GM12878 (cell line): ENCODE measurements at regions of chr1 and their contacts with region 1.

Region 1: GRCh38 chr1:76939050-76939816 is 72.0 kb downstream of the ST6GALNAC5 start:
- DNase-seq: no peak
- ATAC-seq: peak; percentile 65
- H3K4me3 ChIP-seq: no peak overlapping the region
- H3K27ac ChIP-seq: no peak overlapping the region
- H3K4me1 ChIP-seq: peaks cover 8% of the 10 kb centered on the region; the same call in 1 of the 2 replicates
- H3K27me3 ChIP-seq: no peaks in the 10 kb centered on the region
- CTCF ChIP-seq: no peak
- EP300 ChIP-seq: peak; percentile 24 to 54; a peak in 2 of 4 replicates
- POLR2A ChIP-seq: no peak
- RAD21 ChIP-seq: no peak

Region 2: DNA sequence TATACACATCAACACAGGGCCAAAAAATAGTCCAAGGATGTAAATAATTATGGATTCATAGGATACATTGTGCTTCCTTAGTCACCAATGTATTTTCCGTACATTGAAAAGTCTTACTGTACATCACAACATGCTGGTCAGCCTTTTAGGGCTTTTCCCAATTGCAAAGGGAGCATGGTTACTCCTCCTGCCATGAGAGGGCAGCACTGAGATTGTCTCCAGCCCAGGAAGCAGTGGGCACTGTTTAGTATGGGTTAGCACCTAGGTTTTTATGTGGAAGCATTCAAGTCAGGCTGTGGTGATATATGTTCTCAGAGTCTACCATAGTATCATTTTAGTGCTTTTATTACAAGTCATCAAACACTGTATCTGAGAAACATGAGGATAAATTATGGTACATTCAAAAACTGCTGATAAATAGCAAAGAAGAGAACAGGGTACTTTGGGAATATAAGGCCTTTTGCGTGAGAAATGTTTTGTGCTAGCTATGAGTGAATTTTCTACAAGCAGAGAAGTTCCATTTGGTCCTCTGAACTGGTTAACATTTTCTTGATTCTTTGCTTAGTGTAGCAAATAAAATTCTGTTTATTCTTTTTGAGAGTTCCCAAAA is 38.0 kb before region 1 on chr1:
- CTCF ChIA-PET with region 1: interaction called, 4 read pairs
- POLR2A ChIA-PET with region 1: interaction called, 3 read pairs
- RAD21 ChIA-PET with region 1: interaction called, 4 read pairs
- SMC1A ChIA-PET with region 1: interaction called, 55 read pairs
- in situ Hi-C with region 1: no loop called
- intact Hi-C with region 1: no loop called
- DNase-seq: peak; percentile 9
- ATAC-seq: peak; percentile 99
- H3K4me3 ChIP-seq: no peak overlapping the region
- H3K27ac ChIP-seq: no peak overlapping the region
- H3K4me1 ChIP-seq: no peaks in the 10 kb centered on the region
- H3K27me3 ChIP-seq: no peaks in the 10 kb centered on the region
- CTCF ChIP-seq: peak; percentile 72 to 80 (median 78)
- EP300 ChIP-seq: no peak
- POLR2A ChIP-seq: no peak
- RAD21 ChIP-seq: peak; percentile 71

Region 3: DNA sequence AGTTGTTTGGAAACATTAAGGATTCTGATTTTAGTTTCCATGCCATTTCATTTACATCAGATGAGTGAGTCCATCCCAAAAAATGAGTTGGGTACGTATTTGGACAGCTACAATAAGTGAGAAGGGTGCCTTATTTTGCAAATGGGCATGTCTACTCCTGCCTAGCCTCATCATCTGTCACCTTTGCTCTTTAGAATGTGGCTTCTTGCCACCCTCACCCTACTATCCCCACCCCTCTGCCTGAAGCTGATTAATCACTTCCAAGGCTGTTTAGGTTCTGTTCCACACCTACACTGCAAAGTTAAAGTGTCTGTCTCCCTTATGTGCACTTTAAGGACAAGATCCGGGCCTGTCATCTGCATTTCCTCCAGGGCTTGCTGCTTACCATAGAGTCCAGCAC is 10.7 kb before region 1 on chr1:
- CTCF ChIA-PET with region 1: interaction called, 13 read pairs
- POLR2A ChIA-PET with region 1: interaction called, 26 read pairs
- RAD21 ChIA-PET with region 1: interaction called, 5 read pairs
- SMC1A ChIA-PET with region 1: interaction called, 28 read pairs
- in situ Hi-C with region 1: no loop called
- intact Hi-C with region 1: no loop called
- DNase-seq: no peak
- ATAC-seq: no peak; the same call in 2 of the 3 replicates
- H3K4me3 ChIP-seq: no peak overlapping the region
- H3K27ac ChIP-seq: no peak overlapping the region
- H3K4me1 ChIP-seq: no peaks in the 10 kb centered on the region
- H3K27me3 ChIP-seq: no peaks in the 10 kb centered on the region
- CTCF ChIP-seq: no peak
- EP300 ChIP-seq: no peak
- POLR2A ChIP-seq: no peak
- RAD21 ChIP-seq: no peak

Region 4: DNA sequence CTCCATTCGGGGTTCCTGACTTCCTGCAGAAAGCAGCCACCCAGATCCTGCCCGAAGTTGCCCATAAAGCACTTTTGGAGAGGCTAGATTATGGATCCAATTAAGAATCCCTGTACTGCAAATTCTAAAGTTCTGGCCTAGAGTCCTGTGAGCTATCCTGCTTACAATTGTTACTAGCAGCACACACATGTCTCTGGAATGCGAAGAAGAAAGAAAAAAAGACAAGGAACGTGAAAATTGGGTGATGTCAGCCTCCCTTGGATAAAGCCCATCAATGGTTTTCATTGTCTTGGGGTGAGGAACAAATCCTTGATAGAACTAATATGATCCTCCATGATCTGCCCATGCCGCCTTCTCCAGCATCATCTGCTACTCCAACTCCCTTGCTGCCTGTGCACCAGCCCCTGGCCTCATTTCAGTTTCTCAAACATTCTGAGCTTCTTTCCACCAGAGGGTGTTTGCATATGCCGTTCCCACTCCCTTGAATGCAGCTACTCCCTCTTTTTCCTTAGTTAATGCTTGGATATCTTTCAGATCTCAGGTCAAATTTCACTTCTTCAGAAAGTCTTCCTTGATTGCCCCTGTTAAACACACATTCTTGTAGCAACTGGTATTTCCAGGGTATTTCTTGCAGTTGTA is 22.1 kb after region 1 on chr1:
- CTCF ChIA-PET with region 1: interaction called, 5 read pairs
- POLR2A ChIA-PET with region 1: no interaction called
- RAD21 ChIA-PET with region 1: interaction called, 4 read pairs
- SMC1A ChIA-PET with region 1: interaction called, 11 read pairs
- in situ Hi-C with region 1: no loop called
- intact Hi-C with region 1: no loop called
- DNase-seq: no peak
- ATAC-seq: no peak
- H3K4me3 ChIP-seq: no peak overlapping the region
- H3K27ac ChIP-seq: no peak overlapping the region
- H3K4me1 ChIP-seq: no peaks in the 10 kb centered on the region
- H3K27me3 ChIP-seq: no peaks in the 10 kb centered on the region
- CTCF ChIP-seq: no peak
- EP300 ChIP-seq: no peak
- POLR2A ChIP-seq: no peak
- RAD21 ChIP-seq: no peak

Region 5: GRCh38 chr1:77031106-77031662 is 92.0 kb after region 1 on chr1:
- CTCF ChIA-PET with region 1: interaction called, 45 read pairs
- POLR2A ChIA-PET with region 1: no interaction called
- RAD21 ChIA-PET with region 1: interaction called, 44 read pairs
- SMC1A ChIA-PET with region 1: interaction called, 56 read pairs
- in situ Hi-C with region 1: no loop called
- intact Hi-C with region 1: no loop called
- DNase-seq: no peak
- ATAC-seq: peak; percentile 86
- H3K4me3 ChIP-seq: no peak overlapping the region
- H3K27ac ChIP-seq: no peak overlapping the region
- H3K4me1 ChIP-seq: no peaks in the 10 kb centered on the region
- H3K27me3 ChIP-seq: no peaks in the 10 kb centered on the region; a peak in 1 of 4 replicates
- CTCF ChIP-seq: peak in 1 of 3 experiments; percentile 14; a peak in 2 of 6 replicates
- EP300 ChIP-seq: no peak
- POLR2A ChIP-seq: no peak
- RAD21 ChIP-seq: peak; percentile 5; the same call in 1 of the 2 replicates

Region 6: GRCh38 chr1:77978969-77979876 is 1040.0 kb after region 1 on chr1 and contains the start of gene FUBP1:
- CTCF ChIA-PET with region 1: no interaction called
- POLR2A ChIA-PET with region 1: no interaction called
- RAD21 ChIA-PET with region 1: no interaction called
- SMC1A ChIA-PET with region 1: no interaction called
- in situ Hi-C with region 1: no loop called
- intact Hi-C with region 1: loop called (anchors 5 kb)
- DNase-seq: peak; percentile 99
- ATAC-seq: peak; percentile 78
- H3K4me3 ChIP-seq: peak within 1 kb of the TSS; percentile 95
- H3K27ac ChIP-seq: peak within 1 kb of the TSS; percentile 100
- H3K4me1 ChIP-seq: no peaks in the 10 kb centered on the region; the same call in 1 of the 2 replicates
- H3K27me3 ChIP-seq: no peaks in the 10 kb centered on the region
- CTCF ChIP-seq: peak; percentile 77 to 84 (median 81)
- EP300 ChIP-seq: no peak
- POLR2A ChIP-seq: peak; percentile 96
- RAD21 ChIP-seq: peak; percentile 15; the same call in 1 of the 2 replicates
- polyA plus RNA-seq, gene FUBP1: 110 to 114 TPM